Esophagus squamous epithelium (tissue), 5 donors: ENCODE measurements at regions of chr1 and their contacts with region 1.

Region 1: GRCh38 chr1:177170756-177171535 is at the start of gene BRINP2:
- DNase-seq: no peak
- H3K4me3 ChIP-seq: peak within 1 kb of the TSS in 3 of 4 donors; percentile 7 to 45 (median 33)
- H3K27ac ChIP-seq: no peak within 1 kb of the TSS
- H3K4me1 ChIP-seq: peaks cover 0 to 13% (median 4%) of the 10 kb centered on the region in 3 donors
- H3K27me3 ChIP-seq: peaks cover 0 to 96% (median 2%) of the 10 kb centered on the region in 4 donors
- CTCF ChIP-seq: no peak
- POLR2A ChIP-seq: no peak
- total RNA-seq, gene BRINP2: not detected

Region 2: DNA sequence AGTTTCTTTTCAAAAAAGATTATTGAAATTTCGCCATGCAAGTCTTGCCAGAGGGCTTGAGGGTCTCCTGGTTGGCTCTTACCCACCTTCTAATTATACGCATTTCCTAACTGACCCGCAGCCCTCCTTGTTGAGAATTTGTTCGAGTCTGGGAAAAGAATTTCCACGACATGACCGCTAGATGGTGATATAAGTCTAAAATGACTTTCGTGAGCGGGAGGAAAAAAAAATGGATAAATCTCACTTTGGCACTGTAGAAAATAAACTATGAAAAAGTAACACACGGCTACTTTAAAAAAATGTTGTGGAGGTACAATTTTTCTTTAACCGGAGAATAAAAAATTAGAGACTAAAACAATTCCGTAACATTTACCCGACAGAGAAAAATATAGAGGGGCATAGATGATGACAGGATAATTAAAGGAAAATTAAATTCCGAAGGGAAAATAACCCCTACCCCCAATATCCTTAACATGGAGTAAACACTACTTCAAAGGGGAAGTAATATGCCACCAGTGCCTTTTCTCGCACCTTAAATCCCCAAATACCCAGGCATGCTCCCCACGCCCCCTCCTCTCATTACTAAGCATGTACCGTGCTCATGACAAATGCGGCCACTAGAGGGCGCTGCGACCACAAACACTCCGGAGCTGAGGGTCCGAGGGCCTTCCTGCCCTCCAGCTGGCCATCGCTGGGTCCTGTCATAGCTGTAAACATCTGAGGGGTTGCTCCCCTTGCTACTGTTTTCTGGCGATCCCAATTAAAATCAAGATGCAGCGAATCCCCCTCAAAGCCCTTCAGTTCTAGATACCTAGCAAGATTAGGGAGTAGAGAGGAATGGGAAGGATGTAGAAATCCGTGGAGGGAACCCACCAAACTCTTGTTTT is 273.4 kb before region 1 on chr1:
- intact Hi-C with region 1: loop called (anchors 10 kb)
- DNase-seq: no peak
- H3K4me3 ChIP-seq: peak overlapping the region in 1 of 4 donors; percentile 37
- H3K27ac ChIP-seq: no peak overlapping the region
- H3K4me1 ChIP-seq: peaks cover 0 to 9% (median 7%) of the 10 kb centered on the region in 3 donors
- H3K27me3 ChIP-seq: peaks cover 0 to 78% (median 0%) of the 10 kb centered on the region in 4 donors
- CTCF ChIP-seq: peak; percentile 43 to 54 (median 50)
- POLR2A ChIP-seq: no peak

Region 3: GRCh38 chr1:177274687-177275211 is 103.8 kb after region 1 on chr1:
- intact Hi-C with region 1: no loop called
- DNase-seq: no peak
- H3K4me3 ChIP-seq: no peak overlapping the region
- H3K27ac ChIP-seq: no peak overlapping the region
- H3K4me1 ChIP-seq: peaks cover 0 to 8% (median 3%) of the 10 kb centered on the region in 3 donors
- H3K27me3 ChIP-seq: no peaks in the 10 kb centered on the region
- CTCF ChIP-seq: no peak
- POLR2A ChIP-seq: no peak